OCI-LY7 (cell line): ENCODE measurements at regions of chr20 and their contacts with region 1.

Region 1: DNA sequence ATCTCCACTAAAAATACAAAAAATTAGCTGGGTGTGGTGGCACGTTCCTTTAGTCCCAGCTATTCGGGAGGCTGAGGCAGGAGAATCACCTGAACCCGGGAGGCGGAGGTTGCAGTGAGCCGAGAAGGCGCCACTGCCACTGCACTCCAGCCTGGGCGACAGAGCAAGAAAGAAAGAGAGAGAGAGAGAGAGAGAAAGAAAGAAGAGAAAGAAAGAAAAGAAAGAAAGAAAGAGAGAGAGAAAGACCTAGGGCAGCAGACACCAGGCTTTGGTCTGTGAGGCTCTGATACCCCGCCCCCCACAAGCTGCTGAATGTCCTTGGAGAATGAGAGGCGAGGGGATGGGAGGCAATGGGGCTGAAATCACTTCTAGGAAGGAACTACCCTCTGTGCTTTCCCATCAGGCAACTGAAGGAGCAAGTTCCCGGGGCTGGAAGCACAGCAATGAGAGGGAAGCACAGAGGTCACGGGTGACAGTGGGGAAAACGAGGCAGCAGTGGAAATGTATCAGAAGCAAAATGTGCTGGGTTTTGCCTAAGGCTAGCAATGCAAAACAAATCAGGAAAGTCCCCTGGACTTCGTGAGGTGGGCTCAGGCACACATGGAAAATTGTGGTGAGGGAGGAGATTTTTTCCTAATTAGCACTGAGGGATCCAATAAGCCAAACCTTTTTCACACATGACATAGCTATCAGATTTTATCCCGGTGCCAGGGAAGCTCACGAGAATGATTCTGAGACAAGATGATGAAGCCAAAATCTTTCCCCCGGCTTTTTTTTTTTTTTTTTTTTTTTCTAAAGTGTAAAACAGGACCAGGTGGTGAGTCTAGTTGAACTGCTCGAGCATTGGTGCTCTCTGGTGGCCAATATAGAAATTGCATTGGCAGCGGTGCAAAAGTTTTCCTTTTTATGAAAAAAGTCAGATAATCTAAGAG is 16.9 kb upstream of the ARFGEF2 start:
- DNase-seq: peak; percentile 79
- H3K4me3 ChIP-seq: peak overlapping the region; percentile 15
- H3K27ac ChIP-seq: no peak overlapping the region
- H3K4me1 ChIP-seq: peaks cover 9% of the 10 kb centered on the region
- CTCF ChIP-seq: peak; percentile 96

Region 2: GRCh38 chr20:48635433-48636310 is 269.0 kb before region 1 on chr20:
- CTCF ChIA-PET with region 1: no interaction called
- POLR2A ChIA-PET with region 1: interaction called, 5 read pairs
- intact Hi-C with region 1: loop called (anchors 1 kb)
- DNase-seq: peak; percentile 70
- H3K4me3 ChIP-seq: no peak overlapping the region
- H3K27ac ChIP-seq: no peak overlapping the region
- H3K4me1 ChIP-seq: no peaks in the 10 kb centered on the region
- CTCF ChIP-seq: peak; percentile 96

Region 3: DNA sequence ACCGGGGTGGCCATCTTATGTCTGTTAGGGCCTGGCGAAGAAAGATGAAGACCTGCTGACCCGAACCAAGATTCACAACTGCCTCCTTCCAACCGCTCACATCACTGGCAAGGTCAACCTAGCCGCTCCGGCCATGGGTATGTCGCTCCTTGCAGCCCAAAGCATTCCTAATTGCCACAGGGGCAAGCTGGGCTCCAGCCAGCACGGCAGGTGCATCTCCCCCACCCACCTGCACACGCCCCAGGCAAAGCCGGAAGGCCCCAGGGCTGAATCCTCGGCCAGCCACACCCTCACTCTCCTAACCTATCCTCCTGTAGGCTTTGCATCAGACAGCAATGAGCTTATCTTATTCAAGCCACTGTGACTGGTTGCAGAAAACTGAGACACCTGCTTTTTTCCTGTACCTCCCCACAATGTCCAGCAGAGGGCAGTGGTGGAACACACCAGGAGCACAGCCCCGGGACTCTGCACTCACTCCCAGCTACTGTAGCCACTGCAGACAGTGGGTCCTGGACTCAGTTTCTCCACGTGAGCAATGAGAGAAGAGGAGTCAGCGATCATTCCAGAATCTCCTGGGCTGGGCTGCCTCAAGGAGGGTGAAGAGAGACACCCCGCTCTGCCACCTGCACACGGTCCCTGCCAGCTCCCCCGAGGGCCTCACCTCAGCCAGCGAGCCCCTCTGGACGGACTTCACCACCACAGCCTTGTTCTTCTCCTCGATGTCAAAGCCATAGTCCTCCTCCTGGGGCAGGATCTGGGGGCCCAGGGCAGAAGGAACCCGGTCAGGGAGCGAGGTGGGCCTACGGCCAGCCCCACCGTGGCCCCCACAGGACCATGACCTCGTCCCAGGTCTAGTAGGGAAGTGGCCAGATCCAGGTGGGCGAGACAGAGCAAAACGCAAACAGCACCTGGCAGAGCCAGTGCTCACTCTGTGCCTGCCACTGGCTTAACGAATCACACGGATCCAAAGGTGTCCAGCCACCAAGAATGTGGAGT is 246.9 kb before region 1 on chr20:
- CTCF ChIA-PET with region 1: interaction called, 4 read pairs
- POLR2A ChIA-PET with region 1: no interaction called
- intact Hi-C with region 1: loop called (anchors 1 kb)
- DNase-seq: peak; percentile 80
- H3K4me3 ChIP-seq: no peak overlapping the region
- H3K27ac ChIP-seq: no peak overlapping the region
- H3K4me1 ChIP-seq: no peaks in the 10 kb centered on the region
- CTCF ChIP-seq: peak; percentile 95

Region 4: DNA sequence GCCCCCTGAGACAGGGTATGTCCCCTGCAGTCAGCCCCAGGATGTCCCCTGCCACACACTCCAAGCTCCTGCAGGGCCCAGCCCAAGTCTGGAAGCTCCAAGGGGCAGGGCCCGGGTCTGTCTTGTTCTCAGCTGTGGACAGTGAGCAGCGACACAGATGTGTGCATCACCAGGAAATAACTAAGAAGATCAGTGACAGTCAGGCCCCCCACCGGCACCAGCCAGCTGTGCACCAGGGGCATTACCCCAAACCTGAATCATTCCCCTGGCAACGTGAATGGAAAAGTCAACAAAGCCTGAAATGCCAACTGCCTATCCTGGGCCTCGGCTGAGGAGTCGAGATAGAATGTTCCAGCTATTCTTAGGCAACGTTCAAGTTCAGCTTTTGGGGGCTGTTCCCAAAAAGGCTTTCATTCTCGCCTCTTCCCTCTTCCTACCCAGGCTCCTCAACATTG is 181.9 kb before region 1 on chr20:
- CTCF ChIA-PET with region 1: no interaction called
- POLR2A ChIA-PET with region 1: interaction called, 3 read pairs
- intact Hi-C with region 1: loop called (anchors 10 kb)
- DNase-seq: peak; percentile 18
- H3K4me3 ChIP-seq: no peak overlapping the region
- H3K27ac ChIP-seq: no peak overlapping the region
- H3K4me1 ChIP-seq: peaks cover 51% of the 10 kb centered on the region
- CTCF ChIP-seq: no peak

Region 5: GRCh38 chr20:48962976-48963771 is 58.5 kb after region 1 on chr20:
- CTCF ChIA-PET with region 1: no interaction called
- POLR2A ChIA-PET with region 1: no interaction called
- intact Hi-C with region 1: no loop called
- DNase-seq: no peak
- H3K4me3 ChIP-seq: no peak overlapping the region
- H3K27ac ChIP-seq: no peak overlapping the region
- H3K4me1 ChIP-seq: no peaks in the 10 kb centered on the region
- CTCF ChIP-seq: no peak